ENCODE measurements at regions of chr1 and their contacts with region 1.

Region 1: DNA sequence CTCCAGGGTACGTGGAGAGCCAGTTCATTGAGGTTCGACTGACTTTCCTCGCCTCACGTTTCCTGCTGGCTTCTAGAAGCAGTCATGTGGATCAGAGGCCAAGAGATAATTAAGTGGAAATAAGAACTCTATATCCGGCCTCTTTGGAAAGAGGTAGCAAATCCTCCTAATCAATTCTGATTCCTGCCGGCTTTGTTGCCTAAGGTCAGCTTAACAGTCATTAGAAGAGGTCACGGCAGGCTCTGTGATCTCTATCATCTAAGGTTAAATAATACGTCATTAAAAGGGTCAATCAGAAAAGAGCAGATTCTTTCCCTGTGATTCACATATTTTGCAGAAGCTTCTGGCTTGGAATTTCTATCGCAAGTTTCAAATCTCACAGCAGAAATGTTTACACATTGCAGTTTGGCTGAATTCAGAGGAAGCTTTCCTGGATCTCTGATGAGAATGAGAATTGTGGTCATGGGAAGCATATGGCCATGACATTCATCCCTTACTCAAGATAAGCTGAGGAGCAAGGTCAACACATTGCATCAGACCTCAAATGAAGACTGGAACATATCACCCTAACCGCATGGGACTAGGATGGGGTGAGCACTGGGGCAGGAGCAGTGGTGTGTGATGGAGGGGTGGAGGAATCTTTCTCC is 189.4 kb downstream of the PBX1 start:
- DNase-seq: peak; percentile 46 to 97
- H3K4me3 ChIP-seq: peak overlapping the region; percentile 9; the same call in 1 of the 2 replicates
- H3K27ac ChIP-seq: peak overlapping the region; percentile 92
- H3K4me1 ChIP-seq: peaks cover 69% of the 10 kb centered on the region
- H3K27me3 ChIP-seq: no peaks in the 10 kb centered on the region
- CTCF ChIP-seq: no peak

Region 2: GRCh38 chr1:164163289-164163864 is 585.0 kb before region 1 on chr1:
- CTCF ChIA-PET with region 1: no interaction called
- POLR2A ChIA-PET with region 1: interaction called, 13 read pairs
- intact Hi-C with region 1: no loop called
- DNase-seq: no peak
- H3K4me3 ChIP-seq: no peak overlapping the region
- H3K27ac ChIP-seq: no peak overlapping the region
- H3K4me1 ChIP-seq: no peaks in the 10 kb centered on the region
- H3K27me3 ChIP-seq: no peaks in the 10 kb centered on the region
- CTCF ChIP-seq: no peak

Region 3: GRCh38 chr1:164644774-164645235 is 103.6 kb before region 1 on chr1:
- CTCF ChIA-PET with region 1: no interaction called
- POLR2A ChIA-PET with region 1: no interaction called
- intact Hi-C with region 1: loop called (anchors 5 kb)
- DNase-seq: peak in 1 of 2 experiments; percentile 85
- H3K4me3 ChIP-seq: 0 out of 2 replicates have a peak overlapping the region, but pooled peaks have one; percentile 26
- H3K27ac ChIP-seq: peak overlapping the region; percentile 98
- H3K4me1 ChIP-seq: peaks cover 84% of the 10 kb centered on the region
- H3K27me3 ChIP-seq: no peaks in the 10 kb centered on the region
- CTCF ChIP-seq: no peak

Region 4: GRCh38 chr1:164720440-164721227 is 27.7 kb before region 1 on chr1:
- CTCF ChIA-PET with region 1: no interaction called
- POLR2A ChIA-PET with region 1: interaction called, 13 read pairs
- intact Hi-C with region 1: no loop called
- DNase-seq: no peak
- H3K4me3 ChIP-seq: no peak overlapping the region
- H3K27ac ChIP-seq: no peak overlapping the region
- H3K4me1 ChIP-seq: peaks cover 9% of the 10 kb centered on the region
- H3K27me3 ChIP-seq: no peaks in the 10 kb centered on the region
- CTCF ChIP-seq: no peak

Region 5: DNA sequence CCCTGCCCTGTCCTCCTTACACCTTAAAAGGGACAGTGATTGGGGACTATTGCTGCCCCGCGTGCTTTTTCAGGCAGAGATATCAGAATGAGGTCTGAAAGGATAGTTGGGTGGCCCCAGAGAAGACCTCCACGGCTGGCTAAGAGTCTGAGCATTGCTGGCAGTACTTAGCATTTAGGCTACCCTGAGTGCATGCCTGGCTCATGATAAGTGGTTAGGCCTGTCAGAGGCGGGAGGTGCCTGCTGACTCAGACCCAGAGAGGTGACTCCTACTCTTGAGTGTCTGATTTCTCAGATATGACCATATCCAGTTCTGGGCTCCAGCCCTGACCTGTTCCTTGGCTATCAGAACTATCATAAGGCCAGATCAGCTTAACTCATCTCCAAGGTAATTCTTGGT is 24.3 kb after region 1 on chr1:
- CTCF ChIA-PET with region 1: no interaction called
- POLR2A ChIA-PET with region 1: interaction called, 7 read pairs
- intact Hi-C with region 1: loop called (anchors 2 kb)
- DNase-seq: peak; percentile 84 to 96
- H3K4me3 ChIP-seq: peak overlapping the region; percentile 25; the same call in 1 of the 2 replicates
- H3K27ac ChIP-seq: peak overlapping the region; percentile 98
- H3K4me1 ChIP-seq: peaks cover 80% of the 10 kb centered on the region
- H3K27me3 ChIP-seq: no peaks in the 10 kb centered on the region
- CTCF ChIP-seq: no peak

Region 6: GRCh38 chr1:164922585-164922984 is 174.2 kb after region 1 on chr1:
- CTCF ChIA-PET with region 1: no interaction called
- POLR2A ChIA-PET with region 1: no interaction called
- intact Hi-C with region 1: no loop called
- DNase-seq: no peak
- H3K4me3 ChIP-seq: no peak overlapping the region
- H3K27ac ChIP-seq: no peak overlapping the region
- H3K4me1 ChIP-seq: no peaks in the 10 kb centered on the region
- H3K27me3 ChIP-seq: no peaks in the 10 kb centered on the region
- CTCF ChIP-seq: no peak

Measured in PC-9 (cell line).